ENCODE measurements at regions of chr16 and their contacts with region 1.

Region 1: GRCh38 chr16:25089351-25089750 is 22.2 kb upstream of the LCMT1 start:
- DNase-seq: no peak
- ATAC-seq: no peak

Region 2: DNA sequence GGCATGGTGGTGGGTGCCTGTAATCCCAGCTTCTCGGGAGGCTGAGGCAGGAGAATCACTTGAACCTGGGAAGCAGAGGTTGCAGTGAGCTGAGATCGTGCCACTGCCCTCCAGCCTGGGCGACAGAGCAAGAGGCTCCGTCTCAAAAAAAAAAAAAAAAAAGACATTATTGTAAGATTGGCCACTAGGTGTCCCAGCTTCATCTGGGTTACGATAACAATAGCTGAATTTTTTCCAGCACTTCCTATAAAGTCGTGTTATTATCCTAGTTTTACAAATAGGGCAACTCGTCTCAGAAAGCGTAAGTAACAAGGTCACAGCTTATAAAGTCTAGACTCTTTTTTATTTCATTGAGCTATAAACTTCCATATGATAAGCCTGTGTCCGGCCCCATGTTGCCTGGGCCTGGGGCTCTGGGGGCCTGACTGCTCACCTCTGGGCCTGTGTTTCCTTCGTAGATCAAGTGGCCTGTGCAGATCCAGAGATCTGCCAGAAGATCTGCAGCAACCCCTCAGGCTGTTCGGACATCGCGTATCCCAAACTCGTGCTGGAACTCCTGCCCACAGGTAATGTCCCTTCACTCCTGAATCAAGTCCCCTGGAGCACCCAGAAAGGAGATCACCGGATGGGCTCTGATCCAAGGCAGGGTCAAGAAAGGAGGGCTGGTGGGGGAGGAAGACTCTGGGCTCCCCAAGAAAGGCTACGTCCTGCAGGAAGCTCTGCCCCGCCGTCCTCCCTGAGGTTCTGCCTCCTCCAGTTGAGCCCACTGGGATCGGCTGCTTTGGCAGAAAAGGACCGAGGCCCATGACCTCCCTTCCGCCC is 182.9 kb before region 1 on chr16:
- intact Hi-C with region 1: no loop called
- DNase-seq: no peak
- ATAC-seq: no peak

Region 3: GRCh38 chr16:24950275-24950674 is 139.1 kb before region 1 on chr16:
- intact Hi-C with region 1: loop called (anchors 10 kb)
- DNase-seq: no peak
- ATAC-seq: no peak

Region 4: GRCh38 chr16:25199484-25199883 is 110.1 kb after region 1 on chr16:
- intact Hi-C with region 1: no loop called
- DNase-seq: no peak
- ATAC-seq: no peak

Region 5: GRCh38 chr16:25235991-25236390 is 146.6 kb after region 1 on chr16:
- intact Hi-C with region 1: no loop called
- DNase-seq: no peak
- ATAC-seq: no peak

Measured in Right ventricle myocardium superior (tissue), 1 donor.